WTC11 (cell line): ENCODE measurements at regions of chr12 and their contacts with region 1.

Region 1: DNA sequence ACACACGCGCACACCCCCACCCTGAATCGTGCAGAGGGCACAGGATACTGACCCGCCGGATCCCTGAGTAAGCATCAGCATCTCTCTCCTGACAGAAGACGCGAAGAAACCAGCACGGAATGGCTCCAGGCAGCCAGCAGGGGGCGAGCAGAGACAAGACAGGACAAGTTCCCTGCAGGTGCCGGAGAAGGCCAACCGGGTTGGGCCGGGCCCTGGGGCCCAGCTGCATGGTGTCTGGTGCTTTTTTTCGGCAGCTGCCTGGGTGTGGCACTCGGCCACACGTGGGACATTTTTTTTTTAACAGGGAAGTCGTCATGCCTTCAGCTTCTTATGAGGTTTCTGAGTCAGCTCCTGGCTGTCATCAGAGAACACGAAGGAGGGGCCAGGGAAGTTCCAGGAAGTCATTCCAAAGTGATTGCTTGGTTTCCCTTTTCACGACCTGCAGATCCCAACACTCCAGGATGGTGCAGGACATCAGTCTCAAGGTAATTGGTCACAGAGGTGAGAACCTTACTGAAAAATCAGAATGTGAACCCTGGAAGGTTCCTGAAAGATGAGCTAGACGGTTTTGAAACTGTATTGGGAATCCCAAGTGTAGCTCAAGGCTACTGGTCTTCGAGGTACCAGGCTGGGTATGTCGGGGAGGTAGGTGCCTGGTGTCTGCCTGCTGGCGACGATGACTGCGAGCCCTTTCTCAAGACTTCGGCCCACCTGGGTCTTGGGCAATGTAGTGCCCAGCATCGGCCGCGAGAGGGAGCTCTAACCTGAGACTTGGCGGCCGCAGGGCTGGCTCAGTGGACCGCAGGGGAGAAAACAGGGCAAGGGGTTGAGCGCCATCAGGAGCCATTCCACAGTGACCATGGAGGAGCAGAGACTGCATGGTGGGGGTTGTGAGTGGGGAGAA is 190.8 kb upstream of the PRMT8 start:
- DNase-seq: peak; percentile 94
- ATAC-seq: peak; percentile 71
- H3K4me3 Mint-ChIP-seq: peak overlapping the region; percentile 50
- H3K27ac Mint-ChIP-seq: no peak overlapping the region; the same call in 1 of the 2 replicates
- H3K4me1 Mint-ChIP-seq: peaks cover 12% of the 10 kb centered on the region
- H3K27me3 Mint-ChIP-seq: no peaks in the 10 kb centered on the region; the same call in 1 of the 2 replicates
- CTCF ChIP-seq: peak; percentile 95

Region 2: DNA sequence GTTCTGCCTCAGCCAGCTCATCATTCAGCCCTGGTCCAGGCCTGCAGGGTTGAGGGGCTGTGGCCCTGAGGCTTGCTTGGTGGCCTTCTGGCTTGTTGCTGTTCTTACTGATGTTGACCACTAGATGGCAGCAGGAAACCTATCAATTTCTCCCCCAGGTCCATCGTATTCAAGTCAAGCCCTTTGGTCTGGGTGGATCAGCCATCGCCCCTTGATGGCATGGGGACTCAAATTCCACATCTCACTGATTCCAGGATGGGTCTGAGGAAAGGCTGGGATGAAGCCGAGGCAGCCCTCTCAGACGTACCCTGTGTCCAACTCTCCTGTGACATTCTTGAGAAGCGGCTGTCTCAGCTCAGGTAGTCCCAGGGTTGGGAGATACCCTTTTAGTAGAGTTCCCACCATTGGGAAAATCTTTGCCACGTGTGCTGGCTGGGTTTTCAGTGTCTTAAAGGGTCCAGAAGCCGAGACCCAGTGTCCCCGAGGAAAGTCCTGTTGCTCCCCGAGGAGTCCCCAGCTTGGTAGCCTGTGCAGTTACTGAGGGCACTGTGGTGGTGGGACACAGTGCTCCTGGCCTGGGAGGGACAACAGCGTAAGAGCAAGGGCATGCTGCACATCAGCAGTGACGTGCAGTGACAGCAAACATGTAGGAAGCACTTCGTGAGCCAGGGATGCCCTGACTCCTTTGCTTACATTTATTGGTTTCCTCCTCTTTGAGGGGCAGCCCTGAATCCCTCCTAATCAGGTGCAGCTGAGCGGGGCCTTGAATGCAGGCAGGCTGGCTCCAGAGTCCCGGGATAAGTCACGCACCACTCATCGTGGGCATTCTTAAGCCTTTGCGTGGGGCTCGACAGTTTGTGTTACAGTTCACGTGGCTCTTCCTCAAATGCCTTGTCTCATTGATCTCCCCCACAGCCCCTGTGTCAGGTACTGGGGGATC is 164.4 kb before region 1 on chr12:
- CTCF ChIA-PET with region 1: interaction called, 13 read pairs
- POLR2A ChIA-PET with region 1: no interaction called
- DNase-seq: peak; percentile 64
- ATAC-seq: peak; percentile 72
- H3K4me3 Mint-ChIP-seq: no peak overlapping the region
- H3K27ac Mint-ChIP-seq: no peak overlapping the region
- H3K4me1 Mint-ChIP-seq: peaks cover 61% of the 10 kb centered on the region
- H3K27me3 Mint-ChIP-seq: no peaks in the 10 kb centered on the region
- CTCF ChIP-seq: peak; percentile 82

Region 3: DNA sequence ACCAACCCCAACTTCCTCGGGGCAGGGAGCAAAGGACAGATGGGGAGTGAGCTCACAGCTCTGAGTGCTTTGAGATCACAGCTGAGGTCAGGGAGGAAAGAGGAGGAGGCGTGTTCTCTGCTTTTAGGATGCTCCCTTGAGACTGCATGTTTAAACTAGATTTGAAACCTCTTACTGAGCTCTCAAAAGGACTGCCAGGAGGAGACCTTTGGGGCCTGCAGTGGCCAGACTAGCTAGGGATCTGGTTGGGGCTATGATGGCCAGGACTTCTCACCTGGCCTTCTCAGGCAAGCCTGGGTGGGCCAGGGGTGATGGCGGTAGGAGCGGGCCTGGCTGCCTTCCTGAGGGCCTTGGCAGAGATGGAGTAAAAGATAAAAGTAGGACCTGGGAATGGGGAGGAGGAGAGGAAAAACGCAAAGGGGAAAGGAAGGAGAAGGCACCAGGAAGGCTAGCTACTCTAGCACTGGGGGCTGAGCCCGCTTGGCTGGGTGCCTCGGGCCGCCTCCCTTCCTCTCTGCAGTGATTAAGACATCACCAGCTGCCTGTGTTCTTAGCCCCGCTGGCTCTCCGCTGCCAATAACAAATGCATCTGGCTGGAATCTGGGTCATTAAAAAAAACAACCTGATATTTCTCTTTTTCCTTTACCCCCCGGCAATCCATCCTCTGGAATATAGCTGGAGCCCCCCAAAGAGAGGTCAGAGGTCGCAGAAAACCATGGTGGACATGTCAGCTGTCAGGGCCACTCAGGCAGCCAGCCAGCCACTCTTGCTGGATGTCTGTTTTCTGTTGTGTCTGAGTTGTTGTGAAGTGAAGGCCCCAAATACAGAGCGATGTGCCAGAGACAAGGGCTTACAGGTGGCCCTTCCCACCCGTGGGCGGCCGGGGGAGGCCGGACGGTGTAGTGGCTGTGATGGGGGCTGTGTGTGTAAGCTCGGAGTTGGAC is 81.7 kb before region 1 on chr12:
- CTCF ChIA-PET with region 1: interaction called, 15 read pairs
- POLR2A ChIA-PET with region 1: no interaction called
- DNase-seq: no peak
- ATAC-seq: no peak
- H3K4me3 Mint-ChIP-seq: no peak overlapping the region
- H3K27ac Mint-ChIP-seq: peak overlapping the region; percentile 51
- H3K4me1 Mint-ChIP-seq: peaks cover 20% of the 10 kb centered on the region
- H3K27me3 Mint-ChIP-seq: no peaks in the 10 kb centered on the region
- CTCF ChIP-seq: no peak

Region 4: GRCh38 chr12:3326156-3326849 is 26.1 kb after region 1 on chr12:
- CTCF ChIA-PET with region 1: interaction called, 34 read pairs
- POLR2A ChIA-PET with region 1: no interaction called
- DNase-seq: peak; percentile 60
- ATAC-seq: peak; percentile 94
- H3K4me3 Mint-ChIP-seq: no peak overlapping the region
- H3K27ac Mint-ChIP-seq: no peak overlapping the region
- H3K4me1 Mint-ChIP-seq: peaks cover 25% of the 10 kb centered on the region
- H3K27me3 Mint-ChIP-seq: no peaks in the 10 kb centered on the region; the same call in 1 of the 2 replicates
- CTCF ChIP-seq: 0 out of 2 replicates have a peak, but pooled peaks have one; percentile 11

Region 5: GRCh38 chr12:3381059-3382047 is 81.2 kb after region 1 on chr12:
- CTCF ChIA-PET with region 1: no interaction called
- POLR2A ChIA-PET with region 1: no interaction called
- DNase-seq: no peak
- ATAC-seq: no peak
- H3K4me3 Mint-ChIP-seq: no peak overlapping the region
- H3K27ac Mint-ChIP-seq: no peak overlapping the region
- H3K4me1 Mint-ChIP-seq: peaks cover 10% of the 10 kb centered on the region
- H3K27me3 Mint-ChIP-seq: no peaks in the 10 kb centered on the region
- CTCF ChIP-seq: no peak

Region 6: GRCh38 chr12:3453990-3454675 is 154.0 kb after region 1 on chr12:
- CTCF ChIA-PET with region 1: interaction called, 37 read pairs
- POLR2A ChIA-PET with region 1: no interaction called
- DNase-seq: no peak
- ATAC-seq: peak; percentile 15
- H3K4me3 Mint-ChIP-seq: no peak overlapping the region
- H3K27ac Mint-ChIP-seq: no peak overlapping the region
- H3K4me1 Mint-ChIP-seq: peaks cover 15% of the 10 kb centered on the region
- H3K27me3 Mint-ChIP-seq: no peaks in the 10 kb centered on the region; the same call in 1 of the 2 replicates
- CTCF ChIP-seq: no peak

Region 7: DNA sequence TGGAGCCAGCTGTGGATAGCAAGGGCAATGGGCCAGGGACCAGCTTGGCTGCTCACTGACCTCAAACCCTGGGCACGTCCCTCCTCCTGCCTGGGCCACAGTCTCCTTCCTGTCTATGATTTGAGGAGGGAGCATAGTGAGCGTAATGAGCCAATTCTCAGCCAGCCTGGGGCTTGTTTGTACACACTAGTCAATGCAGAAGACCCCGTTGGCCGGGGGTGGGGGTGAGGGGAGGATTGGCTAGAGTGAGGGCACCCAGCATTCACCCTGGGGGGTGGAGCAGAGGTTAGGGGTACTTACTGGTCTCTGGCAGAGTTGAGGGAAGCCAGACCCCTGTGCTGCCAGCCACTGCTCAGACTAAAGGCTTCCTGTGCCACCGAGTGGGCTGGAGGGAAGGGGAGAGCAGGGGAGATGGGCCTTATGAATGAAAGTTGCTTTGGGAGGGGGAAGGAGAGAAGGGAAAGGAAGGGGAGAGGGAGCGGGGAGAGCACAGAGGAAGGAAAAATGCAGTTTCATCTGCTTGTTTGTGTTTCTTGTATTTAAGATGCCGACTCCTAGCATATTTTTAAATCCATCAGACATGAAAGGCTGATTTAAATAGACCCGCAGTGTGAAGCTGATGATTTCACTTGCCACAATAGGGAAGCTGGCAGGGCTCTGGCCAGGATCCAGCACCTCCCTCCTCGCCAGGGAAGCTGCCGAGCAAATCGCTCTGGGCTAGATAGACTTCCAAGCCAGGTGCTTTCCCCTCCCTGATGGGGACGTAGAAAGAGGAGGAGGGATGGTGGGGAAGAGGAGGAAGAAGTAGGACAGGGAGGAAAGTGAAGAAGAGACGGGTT is 304.8 kb after region 1 on chr12:
- CTCF ChIA-PET with region 1: interaction called, 23 read pairs
- POLR2A ChIA-PET with region 1: no interaction called
- DNase-seq: peak; percentile 46
- ATAC-seq: peak; percentile 65
- H3K4me3 Mint-ChIP-seq: peak overlapping the region; percentile 57
- H3K27ac Mint-ChIP-seq: peak overlapping the region; percentile 34; the same call in 1 of the 2 replicates
- H3K4me1 Mint-ChIP-seq: peaks cover 72% of the 10 kb centered on the region
- H3K27me3 Mint-ChIP-seq: peaks cover 18% of the 10 kb centered on the region
- CTCF ChIP-seq: no peak

Region 8: GRCh38 chr12:3680896-3681594 is 380.9 kb after region 1 on chr12:
- CTCF ChIA-PET with region 1: interaction called, 23 read pairs
- POLR2A ChIA-PET with region 1: no interaction called
- DNase-seq: no peak
- ATAC-seq: no peak
- H3K4me3 Mint-ChIP-seq: no peak overlapping the region
- H3K27ac Mint-ChIP-seq: no peak overlapping the region
- H3K4me1 Mint-ChIP-seq: no peaks in the 10 kb centered on the region; the same call in 1 of the 2 replicates
- H3K27me3 Mint-ChIP-seq: no peaks in the 10 kb centered on the region
- CTCF ChIP-seq: no peak